H1 (cell line): ENCODE measurements at regions of chr1 and their contacts with region 1.

Region 1: DNA sequence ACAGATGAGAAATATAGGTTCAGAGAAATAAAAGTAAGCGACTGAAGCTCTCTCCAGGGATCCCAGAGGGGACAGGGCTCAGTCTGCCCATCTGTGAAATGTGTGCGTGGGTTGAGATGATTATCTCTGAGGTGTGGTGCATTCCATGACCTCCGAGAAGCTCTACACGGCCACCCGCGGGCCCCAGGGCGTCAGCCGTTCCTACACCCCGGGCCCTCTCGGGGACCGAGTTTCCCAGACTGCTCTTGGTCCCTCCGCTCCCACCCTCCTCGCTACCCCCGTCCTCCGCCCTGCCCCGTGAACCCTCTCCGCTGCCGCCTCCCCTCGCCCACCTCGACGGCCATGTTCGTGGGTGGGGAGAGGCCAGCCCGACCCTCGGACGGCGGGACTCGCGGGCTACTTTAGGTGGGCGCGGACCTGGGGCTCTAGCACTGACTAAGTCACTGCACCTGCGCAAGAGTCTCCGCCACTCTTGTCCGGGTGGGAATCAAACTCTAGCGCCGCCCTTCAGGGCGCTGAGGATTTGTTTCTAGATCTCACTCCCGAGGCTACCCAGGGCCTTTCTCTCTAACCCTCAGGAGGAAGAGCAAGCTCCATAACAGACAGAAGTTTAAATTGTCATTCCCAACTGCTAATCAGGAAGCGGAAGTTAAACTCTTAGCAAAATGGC is 47.7 kb upstream of the VWA5B1 start:
- DNase-seq: no peak
- H3K4me3 ChIP-seq: no peak overlapping the region
- H3K27ac ChIP-seq: no peak overlapping the region
- H3K4me1 ChIP-seq: peaks cover 0 to 3% (median 0%) of the 10 kb centered on the region in 4 experiments; a peak in 1 of 7 replicates
- H3K27me3 ChIP-seq: no peaks in the 10 kb centered on the region
- CTCF ChIP-seq: peak in 2 of 3 experiments; percentile 7 to 43; a peak in 3 of 4 replicates
- EP300 ChIP-seq: no peak
- POLR2A ChIP-seq: no peak
- RAD21 ChIP-seq: no peak

Region 2: GRCh38 chr1:20087668-20088067 is 155.3 kb before region 1 on chr1:
- CTCF ChIA-PET with region 1: no interaction called
- POLR2A ChIA-PET with region 1: no interaction called
- DNase-seq: no peak
- H3K4me3 ChIP-seq: no peak overlapping the region
- H3K27ac ChIP-seq: no peak overlapping the region
- H3K4me1 ChIP-seq: no peaks in the 10 kb centered on the region; a peak in 1 of 7 replicates
- H3K27me3 ChIP-seq: no peaks in the 10 kb centered on the region; a peak in 1 of 7 replicates
- CTCF ChIP-seq: peak; percentile 18 to 43 (median 31)
- EP300 ChIP-seq: no peak
- POLR2A ChIP-seq: no peak
- RAD21 ChIP-seq: peak; percentile 7 to 42; a peak in 2 of 4 replicates

Region 3: GRCh38 chr1:20255666-20256065 is 12.7 kb after region 1 on chr1:
- CTCF ChIA-PET with region 1: interaction called, 12 read pairs
- POLR2A ChIA-PET with region 1: no interaction called
- DNase-seq: no peak
- H3K4me3 ChIP-seq: no peak overlapping the region
- H3K27ac ChIP-seq: no peak overlapping the region
- H3K4me1 ChIP-seq: 0 out of 7 replicates have a peak, but pooled peaks cover 0 to 2% (median 0%) of the 10 kb centered on the region in 4 experiments
- H3K27me3 ChIP-seq: no peaks in the 10 kb centered on the region
- CTCF ChIP-seq: no peak
- EP300 ChIP-seq: no peak
- POLR2A ChIP-seq: no peak
- RAD21 ChIP-seq: no peak

Region 4: GRCh38 chr1:20753589-20753988 is 510.6 kb after region 1 on chr1:
- CTCF ChIA-PET with region 1: no interaction called
- POLR2A ChIA-PET with region 1: no interaction called
- DNase-seq: no peak
- H3K4me3 ChIP-seq: no peak overlapping the region
- H3K27ac ChIP-seq: no peak overlapping the region
- H3K4me1 ChIP-seq: no peaks in the 10 kb centered on the region; a peak in 1 of 7 replicates
- H3K27me3 ChIP-seq: no peaks in the 10 kb centered on the region
- CTCF ChIP-seq: no peak
- EP300 ChIP-seq: no peak
- POLR2A ChIP-seq: no peak
- RAD21 ChIP-seq: no peak